ENCODE measurements at regions of chr19 and their contacts with region 1.

Region 1: DNA sequence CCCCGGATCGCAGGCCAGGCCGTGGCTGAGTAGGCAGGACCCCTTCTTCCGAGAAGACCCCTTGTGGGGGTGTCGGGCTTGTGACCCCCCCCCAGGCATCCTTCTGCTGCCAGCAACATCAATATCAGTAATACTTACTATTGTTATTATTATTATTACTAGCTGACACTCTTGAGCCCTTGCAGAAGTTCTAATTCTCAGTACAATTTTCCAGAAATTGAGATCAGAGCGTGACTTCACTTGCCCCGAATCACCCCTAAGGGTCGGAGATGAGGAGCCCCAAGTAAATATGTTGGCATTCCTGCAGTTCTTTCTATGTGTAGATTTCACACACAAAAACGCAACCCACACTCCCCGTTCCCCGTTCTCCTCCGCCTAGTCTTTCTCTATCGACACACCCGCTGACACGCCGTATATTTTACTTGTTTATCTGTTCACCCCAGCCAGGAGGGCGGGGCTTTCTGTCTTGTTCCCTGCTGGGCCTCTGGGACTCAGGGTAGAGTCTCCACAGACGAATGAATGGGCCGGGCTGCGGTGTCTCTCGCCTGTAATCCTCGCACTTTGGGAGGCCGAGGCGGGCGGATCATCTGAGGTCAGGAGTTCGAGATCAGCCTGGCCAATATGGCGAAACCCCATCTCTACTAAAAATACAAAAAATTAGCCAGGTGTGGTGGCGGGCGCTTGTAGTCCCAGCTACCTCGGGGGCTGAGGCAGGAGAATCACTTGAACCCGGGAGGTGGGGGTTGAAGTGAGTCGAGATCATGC is 14.7 kb downstream of the TLE5 start:
- DNase-seq: peak; percentile 81 to 83
- H3K4me3 ChIP-seq: peak overlapping the region in 2 of 3 donors; percentile 22 to 37
- H3K27ac ChIP-seq: peak overlapping the region; percentile 69 to 80 (median 75)
- H3K4me1 ChIP-seq: peaks cover 9 to 15% of the 10 kb centered on the region in 2 donors
- H3K27me3 ChIP-seq: no peaks in the 10 kb centered on the region
- CTCF ChIP-seq: no peak
- POLR2A ChIP-seq: peak in 1 of 2 donors; percentile 37

Region 2: GRCh38 chr19:2974342-2975041 is 73.1 kb before region 1 on chr19:
- intact Hi-C with region 1: loop called (anchors 5 kb)
- DNase-seq: peak; percentile 18 to 20
- H3K4me3 ChIP-seq: no peak overlapping the region
- H3K27ac ChIP-seq: peak overlapping the region; percentile 14 to 91 (median 81)
- H3K4me1 ChIP-seq: peaks cover 38 to 75% of the 10 kb centered on the region in 2 donors
- H3K27me3 ChIP-seq: no peaks in the 10 kb centered on the region
- CTCF ChIP-seq: no peak
- POLR2A ChIP-seq: no peak

Region 3: GRCh38 chr19:2986951-2987524 is 60.6 kb before region 1 on chr19:
- intact Hi-C with region 1: no loop called
- DNase-seq: peak; percentile 61 to 63
- H3K4me3 ChIP-seq: no peak overlapping the region
- H3K27ac ChIP-seq: peak overlapping the region in 2 of 3 donors; percentile 9 to 17
- H3K4me1 ChIP-seq: peaks cover 31 to 37% of the 10 kb centered on the region in 2 donors
- H3K27me3 ChIP-seq: no peaks in the 10 kb centered on the region
- CTCF ChIP-seq: no peak
- POLR2A ChIP-seq: no peak

Region 4: DNA sequence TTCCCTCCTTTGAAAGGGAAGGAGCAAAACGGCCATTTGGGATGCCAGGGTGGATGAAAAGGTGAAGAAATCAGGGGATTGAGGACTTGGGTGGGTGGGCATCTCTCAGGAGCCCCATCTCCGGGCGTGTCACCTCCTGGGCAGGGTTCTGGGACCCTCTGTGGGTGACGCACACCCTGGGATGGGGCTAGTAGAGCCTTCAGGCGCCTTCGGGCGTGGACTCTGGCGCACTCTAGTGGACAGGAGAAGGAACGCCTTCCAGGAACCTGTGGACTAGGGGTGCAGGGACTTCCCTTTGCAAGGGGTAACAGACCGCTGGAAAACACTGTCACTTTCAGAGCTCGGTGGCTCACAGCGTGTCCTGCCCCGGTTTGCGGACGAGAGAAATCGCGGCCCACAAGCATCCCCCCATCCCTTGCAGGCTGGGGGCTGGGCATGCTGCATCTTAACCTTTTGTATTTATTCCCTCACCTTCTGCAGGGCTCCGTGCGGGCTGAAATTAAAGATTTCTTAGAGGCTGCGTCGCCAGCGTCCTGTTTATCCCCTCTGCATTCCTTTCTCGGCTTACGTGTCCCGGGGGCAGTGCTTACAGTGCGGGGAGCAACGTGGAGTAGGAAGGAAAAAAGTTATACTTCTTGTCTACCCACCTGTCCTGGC is 115.8 kb after region 1 on chr19:
- intact Hi-C with region 1: no loop called
- DNase-seq: peak; percentile 53 to 64
- H3K4me3 ChIP-seq: no peak overlapping the region
- H3K27ac ChIP-seq: no peak overlapping the region
- H3K4me1 ChIP-seq: peaks cover 7 to 19% of the 10 kb centered on the region in 2 donors
- H3K27me3 ChIP-seq: no peaks in the 10 kb centered on the region
- CTCF ChIP-seq: peak; percentile 77 to 97 (median 86)
- POLR2A ChIP-seq: no peak

Measured in thyroid gland (tissue), 4 donors.